ENCODE measurements at regions of chr14 and their contacts with region 1.

Region 1: GRCh38 chr14:60091550-60092530 is at the start of gene PCNX4:
- DNase-seq: peak; percentile 99
- ATAC-seq: peak; percentile 90
- H3K4me3 ChIP-seq: peak within 1 kb of the TSS; percentile 72 to 93 (median 86)
- H3K4me3 Mint-ChIP-seq: peak within 1 kb of the TSS; percentile 94
- H3K27ac ChIP-seq: peak within 1 kb of the TSS; percentile 95 to 97
- H3K27ac Mint-ChIP-seq: peak within 1 kb of the TSS; percentile 98
- H3K4me1 ChIP-seq: peaks cover 19 to 21% of the 10 kb centered on the region in 2 donors
- H3K4me1 Mint-ChIP-seq: peaks cover 41% of the 10 kb centered on the region
- H3K27me3 ChIP-seq: peaks cover 0 to 4% (median 0%) of the 10 kb centered on the region in 4 experiments
- H3K27me3 Mint-ChIP-seq: no peaks in the 10 kb centered on the region
- CTCF ChIP-seq: no peak
- total RNA-seq, gene PCNX4: 53.4 and 70.1 TPM in 2 replicates

Region 2: GRCh38 chr14:59483900-59484638 is 607.8 kb before region 1 on chr14 and contains the starts of genes JKAMP and L3HYPDH:
- CTCF ChIA-PET with region 1: no interaction called
- POLR2A ChIA-PET with region 1: no interaction called
- intact Hi-C with region 1: loop called (anchors 1 kb)
- DNase-seq: peak; percentile 96
- ATAC-seq: peak; percentile 92
- H3K4me3 ChIP-seq: peak within 1 kb of the TSS; percentile 83 to 97 (median 93)
- H3K4me3 Mint-ChIP-seq: peak within 1 kb of the TSS; percentile 96
- H3K27ac ChIP-seq: peak within 1 kb of the TSS; percentile 57 to 79
- H3K27ac Mint-ChIP-seq: peak within 1 kb of the TSS; percentile 90
- H3K4me1 ChIP-seq: peaks cover 36 to 40% of the 10 kb centered on the region in 2 donors
- H3K4me1 Mint-ChIP-seq: peaks cover 56% of the 10 kb centered on the region
- H3K27me3 ChIP-seq: no peaks in the 10 kb centered on the region
- H3K27me3 Mint-ChIP-seq: no peaks in the 10 kb centered on the region
- CTCF ChIP-seq: peak; percentile 70
- total RNA-seq, gene JKAMP: 25.7 and 30.3 TPM in 2 replicates
- total RNA-seq, gene L3HYPDH: 67.3 and 74.5 TPM in 2 replicates

Region 3: GRCh38 chr14:60064491-60065072 is 27.3 kb before region 1 on chr14:
- CTCF ChIA-PET with region 1: no interaction called
- POLR2A ChIA-PET with region 1: no interaction called
- intact Hi-C with region 1: loop called (anchors 2 kb)
- DNase-seq: peak; percentile 56
- ATAC-seq: peak; percentile 57
- H3K4me3 ChIP-seq: no peak overlapping the region
- H3K4me3 Mint-ChIP-seq: no peak overlapping the region
- H3K27ac ChIP-seq: no peak overlapping the region
- H3K27ac Mint-ChIP-seq: no peak overlapping the region
- H3K4me1 ChIP-seq: no peaks in the 10 kb centered on the region
- H3K4me1 Mint-ChIP-seq: no peaks in the 10 kb centered on the region
- H3K27me3 ChIP-seq: no peaks in the 10 kb centered on the region
- H3K27me3 Mint-ChIP-seq: peaks cover 6% of the 10 kb centered on the region
- CTCF ChIP-seq: peak; percentile 75

Region 4: DNA sequence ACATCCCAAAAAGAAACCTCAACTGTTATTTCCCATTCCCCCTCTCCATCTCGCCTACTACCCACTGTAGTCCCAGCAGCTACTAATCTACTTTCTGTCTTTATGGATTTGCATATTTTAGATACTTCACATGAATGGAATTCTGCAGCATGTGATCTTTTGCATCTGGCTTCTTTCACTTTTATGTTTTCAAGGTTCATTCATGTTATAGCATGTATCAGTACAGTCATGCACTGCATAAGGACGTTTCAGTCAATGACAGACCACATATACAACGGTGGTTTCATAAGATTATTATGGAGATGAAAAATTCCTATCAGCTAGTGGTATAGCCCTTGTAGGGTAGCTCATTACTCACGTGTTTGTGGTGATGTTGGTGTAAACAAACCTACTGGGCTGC is 24.3 kb after region 1 on chr14:
- CTCF ChIA-PET with region 1: no interaction called
- POLR2A ChIA-PET with region 1: no interaction called
- intact Hi-C with region 1: no loop called
- DNase-seq: no peak
- ATAC-seq: no peak
- H3K4me3 ChIP-seq: no peak overlapping the region
- H3K4me3 Mint-ChIP-seq: no peak overlapping the region
- H3K27ac ChIP-seq: no peak overlapping the region
- H3K27ac Mint-ChIP-seq: no peak overlapping the region
- H3K4me1 ChIP-seq: no peaks in the 10 kb centered on the region
- H3K4me1 Mint-ChIP-seq: peaks cover 6% of the 10 kb centered on the region
- H3K27me3 ChIP-seq: no peaks in the 10 kb centered on the region
- H3K27me3 Mint-ChIP-seq: no peaks in the 10 kb centered on the region
- CTCF ChIP-seq: no peak

Region 5: DNA sequence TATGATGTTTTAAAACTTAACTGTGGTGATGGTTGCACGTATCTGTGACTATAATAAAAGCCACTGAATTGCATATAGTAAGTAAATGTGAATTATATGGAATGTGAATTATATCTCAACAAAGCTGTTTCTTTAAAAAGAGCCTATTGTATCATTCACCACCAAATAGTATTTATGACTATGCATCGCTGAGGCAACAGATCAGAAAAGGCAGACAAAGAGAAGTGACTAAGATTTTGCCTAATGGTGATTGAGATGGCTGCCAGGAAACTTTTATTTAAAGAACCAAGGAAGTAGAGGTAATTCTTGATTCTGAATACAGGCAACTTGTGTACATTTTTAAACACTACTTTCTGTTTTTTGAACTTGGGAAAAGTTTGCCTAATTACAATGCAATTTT is 41.6 kb after region 1 on chr14:
- CTCF ChIA-PET with region 1: no interaction called
- POLR2A ChIA-PET with region 1: no interaction called
- intact Hi-C with region 1: no loop called
- DNase-seq: no peak
- ATAC-seq: no peak
- H3K4me3 ChIP-seq: no peak overlapping the region
- H3K4me3 Mint-ChIP-seq: no peak overlapping the region
- H3K27ac ChIP-seq: no peak overlapping the region
- H3K27ac Mint-ChIP-seq: no peak overlapping the region
- H3K4me1 ChIP-seq: no peaks in the 10 kb centered on the region
- H3K4me1 Mint-ChIP-seq: no peaks in the 10 kb centered on the region
- H3K27me3 ChIP-seq: no peaks in the 10 kb centered on the region
- H3K27me3 Mint-ChIP-seq: no peaks in the 10 kb centered on the region
- CTCF ChIP-seq: no peak

Region 6: GRCh38 chr14:60331201-60332045 is 239.6 kb after region 1 on chr14:
- CTCF ChIA-PET with region 1: interaction called, 3 read pairs
- POLR2A ChIA-PET with region 1: no interaction called
- intact Hi-C with region 1: loop called (anchors 1 kb)
- DNase-seq: peak; percentile 85
- ATAC-seq: peak; percentile 66
- H3K4me3 ChIP-seq: peak overlapping the region; percentile 49 to 87 (median 73)
- H3K4me3 Mint-ChIP-seq: peak overlapping the region; percentile 90
- H3K27ac ChIP-seq: peak overlapping the region; percentile 63 to 68
- H3K27ac Mint-ChIP-seq: peak overlapping the region; percentile 71
- H3K4me1 ChIP-seq: peaks cover 16 to 20% of the 10 kb centered on the region in 2 donors
- H3K4me1 Mint-ChIP-seq: peaks cover 26% of the 10 kb centered on the region
- H3K27me3 ChIP-seq: peaks cover 0 to 17% (median 4%) of the 10 kb centered on the region in 4 experiments
- H3K27me3 Mint-ChIP-seq: peaks cover 23% of the 10 kb centered on the region
- CTCF ChIP-seq: peak; percentile 98

Region 7: DNA sequence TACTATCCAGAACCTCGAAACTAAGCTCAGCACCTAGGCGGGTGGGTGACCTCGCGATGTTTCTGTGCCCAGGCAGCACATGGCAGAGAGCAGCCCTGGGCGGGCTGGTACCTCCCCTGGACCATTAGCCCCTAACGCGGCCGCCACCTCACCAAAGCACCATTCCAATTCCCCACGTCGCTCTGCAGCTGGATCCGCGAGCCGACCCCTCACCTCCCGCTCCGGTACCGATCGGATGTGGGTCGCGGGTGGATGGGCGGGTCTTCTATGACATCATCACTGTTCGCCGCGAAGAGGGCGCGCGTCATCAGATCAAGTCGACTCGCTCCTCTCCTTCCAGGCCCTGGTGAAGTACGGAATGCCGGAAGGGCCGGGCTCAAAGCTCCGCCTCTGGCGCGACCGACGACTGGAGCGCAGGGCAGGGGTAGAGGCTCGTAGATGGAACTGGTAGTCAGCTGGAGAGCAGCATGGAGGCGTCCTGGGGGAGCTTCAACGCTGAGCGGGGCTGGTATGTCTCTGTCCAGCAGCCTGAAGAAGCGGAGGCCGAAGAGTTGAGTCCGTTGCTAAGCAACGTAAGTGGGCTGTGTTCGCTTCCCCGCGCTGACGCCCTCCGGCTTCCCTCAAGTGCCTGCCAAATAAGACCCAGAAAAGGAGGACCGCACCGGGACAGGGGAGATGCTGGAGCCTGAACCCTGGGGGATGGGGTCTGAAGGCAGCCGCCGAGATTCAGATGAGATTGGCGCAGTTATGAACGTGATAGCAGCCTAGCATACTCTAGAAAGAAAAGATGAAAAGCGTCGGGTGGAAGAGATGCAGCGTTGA is 889.2 kb after region 1 on chr14 and contains the starts of genes SLC38A6 and TRMT5:
- CTCF ChIA-PET with region 1: no interaction called
- POLR2A ChIA-PET with region 1: no interaction called
- intact Hi-C with region 1: loop called (anchors 5 kb)
- DNase-seq: peak; percentile 95
- ATAC-seq: peak; percentile 84
- H3K4me3 ChIP-seq: peak within 1 kb of the TSS; percentile 86 to 97 (median 90)
- H3K4me3 Mint-ChIP-seq: no peak within 1 kb of the TSS
- H3K27ac ChIP-seq: peak within 1 kb of the TSS; percentile 69 to 77
- H3K27ac Mint-ChIP-seq: no peak within 1 kb of the TSS
- H3K4me1 ChIP-seq: peaks cover 15 to 18% of the 10 kb centered on the region in 2 donors
- H3K4me1 Mint-ChIP-seq: peaks cover 16% of the 10 kb centered on the region
- H3K27me3 ChIP-seq: no peaks in the 10 kb centered on the region
- H3K27me3 Mint-ChIP-seq: no peaks in the 10 kb centered on the region
- CTCF ChIP-seq: no peak
- total RNA-seq, gene SLC38A6: 14.5 and 15.9 TPM in 2 replicates
- total RNA-seq, gene TRMT5: 6.1 and 8.7 TPM in 2 replicates

Region 8: DNA sequence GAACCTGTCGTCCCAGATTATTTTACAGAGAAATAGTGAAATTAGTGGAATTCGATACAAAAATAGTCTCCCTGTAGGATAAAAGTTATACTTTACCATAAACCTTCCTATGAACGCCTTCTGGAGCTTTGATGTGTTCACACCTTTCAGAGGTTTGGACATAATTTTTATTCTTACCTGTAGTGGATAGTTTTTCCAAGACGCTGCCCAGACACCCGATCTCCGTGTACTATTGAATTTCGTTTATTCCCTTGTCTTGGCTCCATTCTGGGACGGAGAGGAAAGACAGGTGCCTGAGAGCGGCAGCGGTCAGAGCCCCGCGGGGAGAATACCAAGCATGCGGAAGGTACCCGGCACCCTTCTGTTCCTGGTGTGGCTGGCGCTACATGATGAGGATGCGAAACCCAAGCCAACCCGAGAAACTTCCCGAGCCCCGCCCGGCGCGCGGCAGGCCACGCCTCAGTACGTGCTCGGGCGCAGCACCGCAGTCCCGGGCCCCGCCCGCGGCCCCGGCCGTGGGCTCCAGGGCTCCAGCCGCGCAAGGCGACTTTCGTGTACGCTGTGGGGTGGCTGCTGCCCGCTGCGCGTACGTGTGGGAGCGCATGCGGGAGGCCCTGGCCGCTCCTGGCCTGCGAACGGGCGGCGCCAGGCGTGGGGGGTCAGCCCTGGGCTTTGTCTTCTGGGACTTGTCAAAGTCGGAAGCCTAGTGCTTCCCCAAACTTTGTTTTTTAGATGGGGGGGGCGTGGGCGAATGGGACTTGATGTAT is 1659.1 kb after region 1 on chr14:
- CTCF ChIA-PET with region 1: no interaction called
- POLR2A ChIA-PET with region 1: no interaction called
- intact Hi-C with region 1: loop called (anchors 5 kb)
- DNase-seq: peak; percentile 91
- ATAC-seq: peak; percentile 91
- H3K4me3 ChIP-seq: peak overlapping the region; percentile 47 to 71 (median 59)
- H3K4me3 Mint-ChIP-seq: peak overlapping the region; percentile 92
- H3K27ac ChIP-seq: peak overlapping the region; percentile 47 to 73
- H3K27ac Mint-ChIP-seq: peak overlapping the region; percentile 93
- H3K4me1 ChIP-seq: peaks cover 25 to 27% of the 10 kb centered on the region in 2 donors
- H3K4me1 Mint-ChIP-seq: peaks cover 42% of the 10 kb centered on the region
- H3K27me3 ChIP-seq: no peaks in the 10 kb centered on the region
- H3K27me3 Mint-ChIP-seq: no peaks in the 10 kb centered on the region
- CTCF ChIP-seq: no peak

Measured in B cell (primary cell).